Calu3 (cell line): ENCODE measurements at regions of chr16 and their contacts with region 1.

Region 1: GRCh38 chr16:3065069-3065741 is at the start of gene IL32:
- DNase-seq: peak; percentile 80
- H3K4me3 Mint-ChIP-seq: peak within 1 kb of the TSS; percentile 72
- H3K27ac Mint-ChIP-seq: peak within 1 kb of the TSS; percentile 77
- H3K4me1 Mint-ChIP-seq: peaks cover 22% of the 10 kb centered on the region
- H3K27me3 Mint-ChIP-seq: no peaks in the 10 kb centered on the region
- CTCF ChIP-seq: no peak
- total RNA-seq, gene IL32: 81.8 and 89.0 TPM in 2 replicates

Region 2: GRCh38 chr16:3106205-3106928 is 41.2 kb after region 1 on chr16:
- CTCF ChIA-PET with region 1: interaction called, 7 read pairs
- intact Hi-C with region 1: loop called (anchors 2 kb)
- DNase-seq: peak; percentile 98
- H3K4me3 Mint-ChIP-seq: peak overlapping the region; percentile 75
- H3K27ac Mint-ChIP-seq: peak overlapping the region; percentile 54
- H3K4me1 Mint-ChIP-seq: peaks cover 8% of the 10 kb centered on the region
- H3K27me3 Mint-ChIP-seq: no peaks in the 10 kb centered on the region
- CTCF ChIP-seq: no peak

Region 3: DNA sequence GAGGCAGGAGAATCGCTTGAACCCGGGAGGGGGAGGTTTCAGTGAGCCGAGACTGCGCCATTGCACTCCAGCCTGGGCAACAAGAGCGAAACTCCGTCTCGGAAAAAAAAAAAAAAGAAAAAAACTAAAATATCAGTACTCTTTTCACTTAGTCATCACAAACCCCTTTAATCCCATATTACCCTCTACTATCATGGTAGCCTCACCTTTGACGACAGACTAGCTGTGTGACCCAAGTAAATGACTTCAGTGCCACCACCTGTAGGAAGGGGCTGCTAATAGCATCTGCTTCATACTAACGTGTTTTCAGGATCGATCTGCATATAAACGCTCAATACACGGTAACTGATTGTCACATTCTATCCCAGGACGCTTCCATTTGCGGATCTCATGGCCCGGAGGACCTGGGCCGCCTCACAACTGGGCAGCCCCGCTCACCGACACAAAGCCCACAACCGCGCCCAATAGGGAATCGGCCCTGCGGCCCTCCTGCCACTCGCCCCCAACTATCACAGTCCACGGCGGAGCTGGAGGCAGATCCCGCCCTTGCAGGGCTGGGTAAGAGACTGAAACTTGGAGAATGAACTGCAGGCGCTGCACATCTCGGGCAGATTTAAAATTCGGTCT is 217.0 kb after region 1 on chr16:
- CTCF ChIA-PET with region 1: no interaction called
- intact Hi-C with region 1: no loop called
- DNase-seq: peak; percentile 61
- H3K4me3 Mint-ChIP-seq: peak overlapping the region; percentile 90
- H3K27ac Mint-ChIP-seq: peak overlapping the region; percentile 95
- H3K4me1 Mint-ChIP-seq: peaks cover 10% of the 10 kb centered on the region
- H3K27me3 Mint-ChIP-seq: peaks cover 18% of the 10 kb centered on the region
- CTCF ChIP-seq: no peak

Region 4: DNA sequence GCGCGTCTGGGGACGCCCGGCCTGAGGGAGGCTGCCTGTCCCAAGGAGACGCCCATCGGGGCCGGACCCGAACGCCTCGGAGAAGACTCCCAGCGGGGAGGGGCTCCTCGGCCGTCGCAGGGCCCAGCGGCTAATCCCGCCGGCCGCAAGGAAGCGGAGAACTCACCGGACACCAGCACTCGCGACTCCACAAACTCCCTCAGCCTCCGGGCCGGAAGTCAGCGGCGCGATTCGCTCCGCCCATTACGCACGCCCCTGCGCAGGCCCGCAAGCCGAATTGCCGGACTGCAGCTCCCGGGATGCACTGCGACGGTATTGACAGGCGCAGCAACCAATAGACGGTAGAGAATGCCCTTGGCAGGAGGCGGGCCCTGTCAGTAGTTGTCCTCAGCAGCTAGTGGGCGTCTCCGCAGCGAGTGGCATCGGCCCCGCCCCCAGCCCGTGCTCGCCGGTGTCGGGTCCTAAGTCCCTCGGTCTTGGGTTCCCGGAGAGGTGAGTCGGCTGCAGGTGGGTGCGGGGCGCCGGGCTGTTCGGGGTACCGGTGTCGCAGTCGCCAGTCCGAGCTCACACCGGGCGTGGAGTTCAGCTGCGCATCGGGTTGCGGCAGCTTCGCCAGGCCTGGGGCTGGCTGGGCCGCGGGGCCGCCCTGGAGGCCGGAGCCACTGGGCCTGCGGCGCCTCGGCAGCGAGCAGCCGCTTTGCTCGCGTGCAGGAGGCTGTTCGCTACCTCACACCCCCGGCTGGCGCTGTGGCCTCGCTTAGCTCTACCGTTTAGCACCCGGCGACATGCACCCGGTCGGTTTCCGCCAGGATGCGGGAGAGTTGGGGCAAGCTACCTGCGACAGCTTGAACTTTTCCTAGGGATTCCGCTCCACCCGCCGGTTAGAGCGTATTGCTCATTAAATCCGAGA is 335.8 kb after region 1 on chr16 and contains the starts of genes ZNF174 and ZSCAN32:
- CTCF ChIA-PET with region 1: no interaction called
- intact Hi-C with region 1: no loop called
- DNase-seq: peak; percentile 100
- H3K4me3 Mint-ChIP-seq: peak within 1 kb of the TSS; percentile 95
- H3K27ac Mint-ChIP-seq: peak within 1 kb of the TSS; percentile 91
- H3K4me1 Mint-ChIP-seq: peaks cover 10% of the 10 kb centered on the region
- H3K27me3 Mint-ChIP-seq: no peaks in the 10 kb centered on the region
- CTCF ChIP-seq: no peak
- total RNA-seq, gene ZNF174: 13.8 and 14.3 TPM in 2 replicates
- total RNA-seq, gene ZSCAN32: 23.8 and 26.1 TPM in 2 replicates